CD8-positive, alpha-beta memory T cell (primary cell): ENCODE measurements at regions of chr22 and their contacts with region 1.

Region 1: GRCh38 chr22:31970490-31971444 is 26.4 kb downstream of the YWHAH start:
- DNase-seq: peak; percentile 85 to 89 (median 87)
- H3K4me3 ChIP-seq: peak overlapping the region; percentile 46
- H3K4me3 Mint-ChIP-seq: peak overlapping the region; percentile 60 to 93 (median 83)
- H3K27ac ChIP-seq: no peak overlapping the region
- H3K27ac Mint-ChIP-seq: peak overlapping the region; percentile 21 to 97 (median 78)
- H3K4me1 ChIP-seq: peaks cover 12% of the 10 kb centered on the region
- H3K4me1 Mint-ChIP-seq: peaks cover 13 to 18% (median 14%) of the 10 kb centered on the region in 3 donors
- H3K27me3 ChIP-seq: no peaks in the 10 kb centered on the region
- H3K27me3 Mint-ChIP-seq: peaks cover 0 to 1% of the 10 kb centered on the region in 2 donors

Region 2: GRCh38 chr22:31489604-31490495 is 480.9 kb before region 1 on chr22 and contains the start of gene EIF4ENIF1:
- CTCF ChIA-PET with region 1: no interaction called
- POLR2A ChIA-PET with region 1: no interaction called
- DNase-seq: peak; percentile 73 to 88 (median 86)
- H3K4me3 ChIP-seq: peak within 1 kb of the TSS; percentile 76
- H3K4me3 Mint-ChIP-seq: peak within 1 kb of the TSS; percentile 90 to 99 (median 93)
- H3K27ac ChIP-seq: peak within 1 kb of the TSS; percentile 87
- H3K27ac Mint-ChIP-seq: peak within 1 kb of the TSS; percentile 95 to 100 (median 99)
- H3K4me1 ChIP-seq: peaks cover 34% of the 10 kb centered on the region
- H3K4me1 Mint-ChIP-seq: peaks cover 39 to 48% (median 39%) of the 10 kb centered on the region in 3 donors
- H3K27me3 ChIP-seq: no peaks in the 10 kb centered on the region
- H3K27me3 Mint-ChIP-seq: no peaks in the 10 kb centered on the region
- total RNA-seq, gene EIF4ENIF1: 52.1 to 53.5 TPM

Region 3: GRCh38 chr22:31951194-31952093 is 19.3 kb before region 1 on chr22:
- CTCF ChIA-PET with region 1: interaction called, 10 read pairs
- POLR2A ChIA-PET with region 1: no interaction called
- DNase-seq: no peak
- H3K4me3 ChIP-seq: no peak overlapping the region
- H3K4me3 Mint-ChIP-seq: peak overlapping the region in 6 of 7 donors; percentile 7 to 74 (median 28)
- H3K27ac ChIP-seq: no peak overlapping the region
- H3K27ac Mint-ChIP-seq: peak overlapping the region in 7 of 8 donors; percentile 55 to 97 (median 85)
- H3K4me1 ChIP-seq: peaks cover 53% of the 10 kb centered on the region
- H3K4me1 Mint-ChIP-seq: peaks cover 57 to 69% (median 65%) of the 10 kb centered on the region in 3 donors
- H3K27me3 ChIP-seq: no peaks in the 10 kb centered on the region
- H3K27me3 Mint-ChIP-seq: no peaks in the 10 kb centered on the region

Region 4: DNA sequence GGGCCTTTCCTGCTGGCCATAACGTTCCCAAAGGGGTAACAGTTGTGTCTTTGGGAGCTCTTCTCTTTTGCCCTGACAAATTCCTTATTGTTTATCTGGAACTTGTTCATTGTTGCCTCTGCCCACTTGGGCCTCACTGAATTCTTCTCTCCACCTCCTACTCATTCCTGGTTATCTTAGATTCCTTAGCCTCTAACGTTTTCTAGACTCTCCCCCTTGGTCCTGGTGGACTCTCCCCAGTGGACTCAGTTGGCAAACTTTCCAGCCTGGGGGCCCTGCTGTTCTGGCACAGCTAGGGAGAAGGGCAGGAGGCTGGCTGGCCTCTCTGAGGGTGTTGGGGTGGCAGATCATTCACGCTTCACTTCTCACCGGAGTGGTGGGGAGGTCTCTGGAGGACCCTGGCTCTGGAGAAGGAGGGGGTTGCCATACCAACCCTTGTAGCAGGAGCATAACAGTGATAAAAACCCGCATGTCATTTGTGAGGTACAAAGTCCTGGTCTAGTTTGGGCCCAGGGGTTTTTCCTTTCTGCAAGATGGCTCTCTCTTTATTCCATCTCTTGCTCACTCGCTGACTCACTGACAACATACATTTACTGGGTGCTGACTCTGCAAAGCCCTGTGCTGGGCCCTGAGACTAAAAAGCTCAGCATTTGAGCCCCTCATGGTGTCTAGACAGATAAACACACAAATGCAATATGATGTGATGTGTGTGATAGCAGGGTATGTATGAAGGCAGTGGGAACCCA is 13.3 kb after region 1 on chr22:
- CTCF ChIA-PET with region 1: interaction called, 12 read pairs
- POLR2A ChIA-PET with region 1: no interaction called
- DNase-seq: no peak
- H3K4me3 ChIP-seq: no peak overlapping the region
- H3K4me3 Mint-ChIP-seq: no peak overlapping the region
- H3K27ac ChIP-seq: no peak overlapping the region
- H3K27ac Mint-ChIP-seq: no peak overlapping the region
- H3K4me1 ChIP-seq: no peaks in the 10 kb centered on the region
- H3K4me1 Mint-ChIP-seq: no peaks in the 10 kb centered on the region
- H3K27me3 ChIP-seq: no peaks in the 10 kb centered on the region
- H3K27me3 Mint-ChIP-seq: peaks cover 4 to 28% of the 10 kb centered on the region in 2 donors